ENCODE measurements at regions of chr10 and their contacts with region 1.

Region 1: DNA sequence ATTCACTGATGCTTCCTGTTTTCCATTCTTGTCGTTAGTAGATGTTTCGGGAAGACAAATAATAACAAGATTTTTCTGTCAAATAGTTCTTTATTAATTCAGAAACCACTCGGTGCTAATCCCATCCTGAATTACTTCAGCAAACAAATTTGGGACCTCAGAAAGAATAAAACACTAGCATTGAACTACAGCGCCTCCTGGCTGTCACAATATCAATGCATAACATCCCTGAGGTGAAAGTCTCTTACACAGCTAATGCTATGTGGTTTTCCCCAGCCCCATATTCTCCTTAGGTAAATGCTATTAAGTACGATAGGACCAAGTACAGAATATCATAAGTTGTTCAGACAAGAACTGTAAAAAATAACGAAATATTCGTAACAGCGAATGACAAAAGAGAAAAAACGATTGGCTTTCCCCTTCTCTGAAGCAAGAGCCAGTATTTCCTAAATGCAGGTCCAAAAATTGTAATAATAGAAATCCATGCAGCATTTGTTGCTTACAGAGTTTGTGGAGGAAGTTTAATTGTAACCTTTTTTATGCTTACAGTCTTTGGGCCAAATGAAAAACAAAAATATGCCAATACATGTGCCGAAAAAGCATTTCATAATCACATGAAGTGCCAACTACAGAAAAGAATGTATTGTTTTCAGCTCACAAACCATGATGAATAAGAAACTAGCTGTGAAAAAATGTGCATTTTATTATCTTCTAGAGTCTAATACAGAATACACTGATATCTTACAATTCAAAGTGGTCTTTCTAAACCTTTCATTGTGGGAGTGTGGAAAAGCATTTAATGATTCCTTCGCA is 47.3 kb downstream of the MYPN start:
- DNase-seq: no peak
- ATAC-seq: peak; percentile 18

Region 2: GRCh38 chr10:67858971-67859370 is 297.6 kb before region 1 on chr10:
- intact Hi-C with region 1: loop called (anchors 5 kb)
- DNase-seq: no peak
- ATAC-seq: no peak

Region 3: GRCh38 chr10:68082872-68083271 is 73.7 kb before region 1 on chr10:
- intact Hi-C with region 1: loop called (anchors 5 kb)
- DNase-seq: no peak
- ATAC-seq: peak; percentile 14

Measured in left ventricle myocardium superior (tissue), 1 donor.